ENCODE measurements at regions of chr17 and their contacts with region 1.

Region 1: GRCh38 chr17:4420692-4421131 is 13.0 kb upstream of the SPNS3 start:
- DNase-seq: no peak
- ATAC-seq: peak; percentile 86 to 95 (median 90)
- H3K4me3 ChIP-seq: no peak overlapping the region
- H3K27ac ChIP-seq: no peak overlapping the region
- H3K4me1 ChIP-seq: no peaks in the 10 kb centered on the region
- H3K27me3 ChIP-seq: no peaks in the 10 kb centered on the region
- CTCF ChIP-seq: peak; percentile 83

Region 2: GRCh38 chr17:4498461-4499397 is 78.0 kb after region 1 on chr17 and contains the start of gene SPNS2:
- intact Hi-C with region 1: loop called in 1 of 2 experiments (anchors 2 kb)
- DNase-seq: peak; percentile 74 to 83
- ATAC-seq: peak; percentile 85 to 93 (median 90)
- H3K4me3 ChIP-seq: peak within 1 kb of the TSS; percentile 60
- H3K27ac ChIP-seq: peak within 1 kb of the TSS; percentile 36
- H3K4me1 ChIP-seq: peaks cover 14% of the 10 kb centered on the region
- H3K27me3 ChIP-seq: peaks cover 0 to 18% (median 14%) of the 10 kb centered on the region in 3 donors
- CTCF ChIP-seq: no peak
- total RNA-seq, gene SPNS2: 3.5 to 7.1 (median 6.3) TPM

Region 3: DNA sequence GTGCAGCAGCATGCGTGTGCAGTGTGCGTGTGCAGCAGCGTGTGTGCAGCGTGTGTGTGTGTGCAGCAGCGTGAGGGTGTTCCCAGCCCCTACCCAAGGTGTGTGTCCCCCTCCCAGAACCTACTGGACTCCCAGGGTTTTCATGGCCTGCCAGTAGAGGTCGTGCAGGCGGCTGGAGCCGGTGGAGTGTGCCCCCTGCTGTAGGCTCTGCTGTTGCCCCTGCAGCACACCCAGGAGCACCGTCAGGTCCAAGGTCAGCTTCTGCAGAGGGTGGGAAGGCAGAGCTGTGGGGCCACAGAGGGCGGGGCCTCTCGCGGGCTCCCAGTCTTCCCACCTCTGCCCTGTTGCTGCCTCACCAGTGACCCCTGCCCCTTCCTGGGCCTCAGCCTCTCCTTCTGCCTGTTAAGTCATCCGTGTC is 119.5 kb after region 1 on chr17:
- intact Hi-C with region 1: loop called (anchors 5 kb)
- DNase-seq: peak in 1 of 2 donors; percentile 15
- ATAC-seq: no peak
- H3K4me3 ChIP-seq: no peak overlapping the region
- H3K27ac ChIP-seq: no peak overlapping the region
- H3K4me1 ChIP-seq: peaks cover 21% of the 10 kb centered on the region
- H3K27me3 ChIP-seq: no peaks in the 10 kb centered on the region
- CTCF ChIP-seq: peak; percentile 12

Region 4: GRCh38 chr17:4625181-4625617 is 204.5 kb after region 1 on chr17:
- intact Hi-C with region 1: loop called in 1 of 2 experiments (anchors 5 kb)
- DNase-seq: no peak
- ATAC-seq: peak; percentile 69 to 85 (median 84)
- H3K4me3 ChIP-seq: no peak overlapping the region
- H3K27ac ChIP-seq: peak overlapping the region; percentile 82
- H3K4me1 ChIP-seq: peaks cover 13% of the 10 kb centered on the region
- H3K27me3 ChIP-seq: no peaks in the 10 kb centered on the region
- CTCF ChIP-seq: no peak

Measured in psoas muscle (tissue), 8 donors.